ENCODE measurements at regions of chr16 and their contacts with region 1.

Region 1: DNA sequence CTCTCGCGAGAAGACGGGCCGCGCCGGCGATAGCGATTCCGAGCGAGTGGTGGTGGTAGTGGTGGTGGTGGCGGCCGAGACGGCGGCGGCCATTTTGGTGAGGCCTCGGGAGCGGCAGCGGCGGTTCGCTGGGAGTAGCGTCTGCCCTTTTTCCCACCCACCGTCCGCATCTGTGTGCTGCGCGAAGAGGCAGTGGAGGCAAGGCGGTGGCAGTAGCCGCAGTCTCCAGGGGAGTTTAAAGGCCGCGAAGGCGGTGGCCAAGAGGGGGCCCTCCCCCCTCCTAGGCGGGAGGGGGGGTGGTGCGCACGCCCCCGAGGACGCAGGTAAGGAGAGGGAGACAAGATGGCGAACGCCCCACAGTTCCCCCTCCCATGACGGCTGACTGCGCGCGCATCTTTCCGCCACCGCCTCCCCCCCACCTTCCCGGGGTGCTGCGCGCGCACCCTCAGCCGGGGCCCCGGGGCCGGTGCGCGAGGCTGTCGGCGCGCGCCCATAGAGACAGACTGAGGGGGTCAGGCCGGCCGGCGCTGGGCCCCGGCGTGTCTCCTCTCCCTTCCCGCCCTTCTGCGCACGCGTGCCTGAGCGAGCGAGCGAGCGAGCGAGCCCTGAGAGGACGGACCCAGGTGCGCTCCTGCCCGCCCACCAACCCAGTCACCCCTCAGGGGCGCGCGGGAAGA is 694 bp upstream of the SRCAP start:
- DNase-seq: peak; percentile 99
- ATAC-seq: peak; percentile 76
- H3K4me3 Mint-ChIP-seq: peak overlapping the region; percentile 94
- H3K27ac Mint-ChIP-seq: peak overlapping the region; percentile 99
- H3K4me1 Mint-ChIP-seq: peaks cover 44% of the 10 kb centered on the region
- H3K27me3 Mint-ChIP-seq: peaks cover 2% of the 10 kb centered on the region

Region 2: GRCh38 chr16:30657866-30658730 is 40.2 kb before region 1 on chr16 and contains the start of gene FBRS:
- CTCF ChIA-PET with region 1: interaction called, 69 read pairs
- DNase-seq: peak; percentile 100
- ATAC-seq: peak; percentile 75
- H3K4me3 Mint-ChIP-seq: peak within 1 kb of the TSS; percentile 86
- H3K27ac Mint-ChIP-seq: peak within 1 kb of the TSS; percentile 100
- H3K4me1 Mint-ChIP-seq: peaks cover 48% of the 10 kb centered on the region
- H3K27me3 Mint-ChIP-seq: no peaks in the 10 kb centered on the region
- total RNA-seq, gene FBRS: 102 to 142 TPM

Measured in activated CD8-positive, alpha-beta memory T cell treated with anti-CD3 and anti-CD28 coated beads, Interleukin-2, amount 10 ng/mL, durations not matched to agents 7 days and 5 days (primary cell).